CD14-positive monocyte (primary cell): ENCODE measurements at regions of chr5 and their contacts with region 1.

Region 1: DNA sequence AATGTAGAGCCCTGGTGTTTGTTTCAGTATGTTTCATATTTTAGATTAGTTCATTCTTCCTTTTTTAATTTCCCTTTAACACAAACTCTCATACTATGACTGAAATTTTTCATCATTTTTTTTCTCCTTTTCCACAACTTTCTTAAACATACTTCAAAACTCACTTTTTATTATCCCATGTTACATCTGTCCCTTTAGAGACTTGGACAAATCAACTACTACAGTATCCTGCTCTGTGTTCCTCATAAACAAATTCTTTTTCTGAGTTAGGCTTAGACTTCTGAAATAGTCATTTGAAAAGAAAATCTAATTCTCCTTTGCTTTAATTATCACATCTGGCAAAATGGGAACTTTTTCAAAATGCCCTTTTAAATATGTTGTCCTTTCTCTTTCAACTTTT is 15.3 kb downstream of the MATR3 start:
- DNase-seq: no peak
- H3K4me3 ChIP-seq: no peak overlapping the region
- H3K4me3 Mint-ChIP-seq: no peak overlapping the region
- H3K27ac ChIP-seq: peak overlapping the region in 1 of 2 donors; percentile 37
- H3K27ac Mint-ChIP-seq: peak overlapping the region in 4 of 7 donors; percentile 3 to 63 (median 33)
- H3K4me1 ChIP-seq: no peaks in the 10 kb centered on the region
- H3K4me1 Mint-ChIP-seq: peaks cover 38% of the 10 kb centered on the region
- H3K27me3 ChIP-seq: no peaks in the 10 kb centered on the region
- H3K27me3 Mint-ChIP-seq: no peaks in the 10 kb centered on the region
- CTCF ChIP-seq: no peak

Region 2: GRCh38 chr5:138252944-138253343 is 1055.9 kb before region 1 on chr5:
- intact Hi-C with region 1: no loop called
- DNase-seq: no peak
- H3K4me3 ChIP-seq: no peak overlapping the region
- H3K4me3 Mint-ChIP-seq: no peak overlapping the region
- H3K27ac ChIP-seq: no peak overlapping the region
- H3K27ac Mint-ChIP-seq: no peak overlapping the region
- H3K4me1 ChIP-seq: no peaks in the 10 kb centered on the region
- H3K4me1 Mint-ChIP-seq: no peaks in the 10 kb centered on the region
- H3K27me3 ChIP-seq: no peaks in the 10 kb centered on the region
- H3K27me3 Mint-ChIP-seq: peaks cover 2 to 6% (median 2%) of the 10 kb centered on the region in 3 donors
- CTCF ChIP-seq: no peak

Region 3: GRCh38 chr5:139341650-139342422 is 33.0 kb after region 1 on chr5 and contains the start of gene PAIP2:
- intact Hi-C with region 1: loop called (anchors 2 to 5 kb)
- DNase-seq: peak; percentile 93 to 97 (median 97)
- H3K4me3 ChIP-seq: peak within 1 kb of the TSS; percentile 74 to 89 (median 87)
- H3K4me3 Mint-ChIP-seq: peak within 1 kb of the TSS; percentile 97 to 99
- H3K27ac ChIP-seq: peak within 1 kb of the TSS; percentile 96 to 99
- H3K27ac Mint-ChIP-seq: peak within 1 kb of the TSS; percentile 94 to 100 (median 99)
- H3K4me1 ChIP-seq: peaks cover 21 to 31% of the 10 kb centered on the region in 2 donors
- H3K4me1 Mint-ChIP-seq: peaks cover 33% of the 10 kb centered on the region
- H3K27me3 ChIP-seq: no peaks in the 10 kb centered on the region
- H3K27me3 Mint-ChIP-seq: peaks cover 5 to 7% (median 6%) of the 10 kb centered on the region in 3 donors
- CTCF ChIP-seq: peak; percentile 65
- polyA plus RNA-seq, gene PAIP2: 68.3 to 325 (median 313) TPM